ENCODE measurements at regions of chr3 and their contacts with region 1.

Region 1: GRCh38 chr3:11060500-11061251 is 68.1 kb downstream of the SLC6A1 start:
- DNase-seq: peak; percentile 46
- ATAC-seq: peak; percentile 61
- H3K4me3 Mint-ChIP-seq: no peak overlapping the region
- H3K27ac Mint-ChIP-seq: no peak overlapping the region
- H3K4me1 Mint-ChIP-seq: no peaks in the 10 kb centered on the region
- H3K27me3 Mint-ChIP-seq: peaks cover 20% of the 10 kb centered on the region
- CTCF ChIP-seq: peak; percentile 57

Region 2: DNA sequence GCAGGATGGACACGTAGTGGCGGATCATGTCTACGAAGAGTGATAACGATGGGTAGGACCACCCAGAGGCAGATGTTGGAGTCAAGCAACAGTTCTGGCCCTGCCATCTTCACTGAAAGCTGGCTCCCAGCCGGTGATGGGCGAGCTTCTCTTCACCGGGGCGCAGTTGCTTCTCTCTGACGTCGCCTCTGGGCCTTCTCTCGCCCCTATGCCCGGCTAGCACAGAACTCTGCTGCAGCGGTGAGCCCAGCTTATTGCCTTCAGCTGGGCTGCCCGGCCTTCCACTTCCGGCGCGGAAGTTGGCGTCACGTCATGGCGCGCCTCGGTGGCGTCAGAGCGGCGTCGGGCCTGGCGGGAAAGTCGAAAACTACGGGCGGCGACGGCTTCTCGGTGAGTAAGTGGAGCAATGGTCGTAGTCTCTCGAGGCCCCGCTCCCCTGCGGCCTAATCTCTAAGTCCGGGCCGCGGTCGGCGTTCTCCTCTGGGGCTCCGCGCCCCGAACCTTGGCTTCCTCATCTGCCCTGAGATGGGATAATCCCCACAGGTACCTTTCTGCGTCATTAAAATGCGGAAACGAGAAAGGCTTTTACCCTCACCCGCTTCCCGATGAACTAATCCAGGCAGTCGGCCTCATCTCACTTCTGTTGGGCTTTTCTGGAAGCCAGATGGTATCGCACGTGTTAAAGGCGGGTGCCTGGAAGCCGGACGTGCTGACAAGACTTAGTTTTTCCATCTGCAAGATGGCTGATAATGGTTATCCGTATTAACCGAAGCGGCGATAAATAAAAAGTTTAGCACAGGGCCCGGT is 1034.4 kb before region 1 on chr3 and contains the start of gene FANCD2:
- CTCF ChIA-PET with region 1: no interaction called
- POLR2A ChIA-PET with region 1: no interaction called
- intact Hi-C with region 1: no loop called
- DNase-seq: peak; percentile 97
- ATAC-seq: peak; percentile 86
- H3K4me3 Mint-ChIP-seq: peak within 1 kb of the TSS; percentile 96
- H3K27ac Mint-ChIP-seq: peak within 1 kb of the TSS; percentile 96
- H3K4me1 Mint-ChIP-seq: peaks cover 37% of the 10 kb centered on the region
- H3K27me3 Mint-ChIP-seq: no peaks in the 10 kb centered on the region
- CTCF ChIP-seq: no peak
- total RNA-seq, gene FANCD2: 26.8 and 31.4 TPM in 2 replicates

Region 3: DNA sequence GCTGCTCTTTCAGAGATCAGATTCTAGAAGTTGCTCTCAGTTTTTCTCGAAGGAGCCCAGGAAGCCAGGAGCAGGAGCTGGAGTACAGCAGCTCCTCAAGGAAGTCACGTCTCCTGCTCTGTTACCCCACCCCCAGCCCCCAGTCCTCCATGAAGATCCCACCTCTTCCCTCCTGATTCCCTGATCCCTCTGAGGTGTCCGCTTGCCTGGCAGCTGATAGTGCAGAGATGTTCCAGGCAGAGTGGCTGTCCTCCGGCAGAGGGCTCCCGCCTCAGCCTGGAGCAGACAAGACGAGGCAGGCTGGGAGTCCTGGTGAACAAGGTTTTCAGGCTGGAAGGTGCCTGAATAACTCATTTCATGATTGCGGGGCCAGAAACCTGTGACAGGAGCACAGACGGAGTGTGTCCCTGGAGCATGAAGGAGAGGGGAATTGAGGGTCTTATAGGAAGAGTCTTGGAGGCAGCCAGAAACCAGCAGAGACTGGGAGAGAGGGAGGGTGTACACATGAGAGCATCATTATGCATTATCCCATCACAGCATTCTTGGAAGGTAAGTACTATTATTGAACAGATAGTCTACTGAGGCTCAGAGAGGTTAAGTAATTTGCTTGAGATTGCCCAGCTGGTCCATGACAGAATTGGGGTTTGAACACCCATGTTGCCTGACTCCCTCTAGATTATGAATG is 94.8 kb after region 1 on chr3:
- CTCF ChIA-PET with region 1: no interaction called
- POLR2A ChIA-PET with region 1: no interaction called
- intact Hi-C with region 1: loop called (anchors 10 kb)
- DNase-seq: no peak
- ATAC-seq: peak; percentile 25
- H3K4me3 Mint-ChIP-seq: peak overlapping the region; percentile 70
- H3K27ac Mint-ChIP-seq: no peak overlapping the region
- H3K4me1 Mint-ChIP-seq: peaks cover 25% of the 10 kb centered on the region
- H3K27me3 Mint-ChIP-seq: peaks cover 45% of the 10 kb centered on the region
- CTCF ChIP-seq: no peak

Region 4: GRCh38 chr3:11201246-11202024 is 140.8 kb after region 1 on chr3:
- CTCF ChIA-PET with region 1: interaction called, 4 read pairs
- POLR2A ChIA-PET with region 1: no interaction called
- intact Hi-C with region 1: loop called (anchors 1 kb)
- DNase-seq: no peak
- ATAC-seq: no peak
- H3K4me3 Mint-ChIP-seq: no peak overlapping the region
- H3K27ac Mint-ChIP-seq: no peak overlapping the region
- H3K4me1 Mint-ChIP-seq: no peaks in the 10 kb centered on the region
- H3K27me3 Mint-ChIP-seq: peaks cover 19% of the 10 kb centered on the region
- CTCF ChIP-seq: no peak

Measured in activated B cell treated with CpG ODN at 0.5 μM for 24 hours (primary cell).